ENCODE measurements at regions of chr1 and their contacts with region 1.

Region 1: GRCh38 chr1:9588551-9589143 is at the start of gene TMEM201:
- DNase-seq: peak; percentile 92
- H3K4me3 Mint-ChIP-seq: peak within 1 kb of the TSS; percentile 78
- H3K27ac Mint-ChIP-seq: no peak within 1 kb of the TSS
- H3K4me1 Mint-ChIP-seq: peaks cover 38% of the 10 kb centered on the region
- H3K27me3 Mint-ChIP-seq: no peaks in the 10 kb centered on the region
- total RNA-seq, gene TMEM201: 9.1 to 9.8 TPM

Region 2: DNA sequence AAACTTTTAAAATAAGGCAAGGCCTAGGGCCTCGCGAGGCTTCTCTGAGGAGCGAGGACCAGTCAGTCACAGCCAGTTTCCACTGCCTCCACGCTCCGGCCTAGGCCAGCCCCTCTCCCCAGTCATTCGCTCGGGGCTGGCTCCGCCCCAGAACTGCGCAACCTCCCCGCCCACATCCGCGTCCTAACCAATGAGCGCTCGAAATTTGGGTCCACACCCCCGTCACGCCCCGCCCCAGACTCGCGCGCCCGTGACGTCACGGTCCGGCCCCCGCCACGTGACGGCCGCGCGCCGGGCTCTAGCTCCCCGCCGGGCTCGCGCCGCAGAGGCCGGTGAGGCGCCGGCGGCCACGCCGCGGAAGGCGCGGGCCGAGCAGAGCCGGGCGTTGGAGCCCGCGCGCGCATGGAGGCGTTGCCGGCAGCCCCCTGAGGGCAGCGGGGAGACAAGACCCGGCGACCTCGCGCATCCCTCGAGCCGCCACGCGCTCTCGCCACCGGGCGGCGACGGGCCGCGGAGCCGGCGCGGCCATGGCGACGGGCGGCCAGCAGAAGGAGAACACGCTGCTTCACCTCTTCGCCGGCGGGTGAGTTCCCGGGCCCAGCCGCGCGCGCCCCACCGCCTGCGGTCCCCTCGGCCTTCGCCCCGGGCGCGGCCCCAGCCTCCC is 49.4 kb before region 1 on chr1 and contains the start of gene SLC25A33:
- CTCF ChIA-PET with region 1: no interaction called
- intact Hi-C with region 1: loop called (anchors 5 kb)
- DNase-seq: peak; percentile 99
- H3K4me3 Mint-ChIP-seq: peak within 1 kb of the TSS; percentile 92
- H3K27ac Mint-ChIP-seq: peak within 1 kb of the TSS; percentile 74
- H3K4me1 Mint-ChIP-seq: peaks cover 32% of the 10 kb centered on the region
- H3K27me3 Mint-ChIP-seq: no peaks in the 10 kb centered on the region
- total RNA-seq, gene SLC25A33: 4.7 to 5.2 TPM

Region 3: GRCh38 chr1:9867408-9868243 is 279.0 kb after region 1 on chr1:
- CTCF ChIA-PET with region 1: interaction called, 3 read pairs
- intact Hi-C with region 1: loop called (anchors 1 kb)
- DNase-seq: peak; percentile 95
- H3K4me3 Mint-ChIP-seq: no peak overlapping the region
- H3K27ac Mint-ChIP-seq: no peak overlapping the region
- H3K4me1 Mint-ChIP-seq: no peaks in the 10 kb centered on the region
- H3K27me3 Mint-ChIP-seq: no peaks in the 10 kb centered on the region

Measured in activated naive CD4-positive, alpha-beta T cell treated with anti-CD3 and anti-CD28 coated beads for 36 hours (primary cell).